Activated B cell treated with CpG ODN at 0.5 μM for 24 hours (primary cell): ENCODE measurements at regions of chr14 and their contacts with region 1.

Region 1: GRCh38 chr14:32076278-32077080 is 625 bp upstream of the ARHGAP5 start:
- DNase-seq: peak; percentile 82
- ATAC-seq: peak; percentile 68
- H3K4me3 Mint-ChIP-seq: peak overlapping the region; percentile 93
- H3K27ac Mint-ChIP-seq: peak overlapping the region; percentile 98
- H3K4me1 Mint-ChIP-seq: peaks cover 33% of the 10 kb centered on the region
- H3K27me3 Mint-ChIP-seq: no peaks in the 10 kb centered on the region
- CTCF ChIP-seq: no peak

Region 2: DNA sequence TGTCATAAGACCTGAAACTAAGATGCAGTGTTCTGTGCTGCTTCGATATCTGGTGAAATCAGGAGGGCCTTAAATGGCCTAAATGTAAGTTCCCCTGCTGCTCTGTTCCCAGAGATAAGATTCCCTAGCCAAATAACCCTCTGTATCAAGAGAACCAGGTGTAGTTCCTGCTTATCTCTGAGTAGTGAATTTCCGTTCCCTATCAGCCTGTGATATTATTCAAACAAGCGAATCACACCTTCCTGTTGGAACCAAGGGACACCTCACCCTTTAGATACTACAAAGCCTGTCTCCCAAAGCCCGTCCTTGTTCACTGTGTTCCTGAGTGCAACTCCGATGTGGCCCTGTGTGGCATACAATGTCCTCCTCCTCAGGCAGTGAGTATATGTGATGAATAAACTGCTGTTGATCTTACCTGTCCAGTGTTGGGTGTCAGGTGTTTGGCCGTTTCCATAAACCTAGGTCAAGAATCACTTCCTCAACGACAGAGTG is 1254.4 kb before region 1 on chr14:
- CTCF ChIA-PET with region 1: no interaction called
- POLR2A ChIA-PET with region 1: interaction called, 10 read pairs
- intact Hi-C with region 1: no loop called
- DNase-seq: no peak
- ATAC-seq: no peak
- H3K4me3 Mint-ChIP-seq: no peak overlapping the region
- H3K27ac Mint-ChIP-seq: no peak overlapping the region
- H3K4me1 Mint-ChIP-seq: peaks cover 2% of the 10 kb centered on the region
- H3K27me3 Mint-ChIP-seq: peaks cover 5% of the 10 kb centered on the region
- CTCF ChIP-seq: no peak

Region 3: GRCh38 chr14:31420319-31421111 is 656.0 kb before region 1 on chr14 and contains the start of gene HEATR5A:
- CTCF ChIA-PET with region 1: no interaction called
- POLR2A ChIA-PET with region 1: interaction called, 9 read pairs
- intact Hi-C with region 1: loop called (anchors 2 kb)
- DNase-seq: peak; percentile 95
- ATAC-seq: peak; percentile 97
- H3K4me3 Mint-ChIP-seq: peak within 1 kb of the TSS; percentile 96
- H3K27ac Mint-ChIP-seq: peak within 1 kb of the TSS; percentile 90
- H3K4me1 Mint-ChIP-seq: peaks cover 22% of the 10 kb centered on the region
- H3K27me3 Mint-ChIP-seq: no peaks in the 10 kb centered on the region
- CTCF ChIP-seq: no peak
- total RNA-seq, gene HEATR5A: 11.1 and 13.2 TPM in 2 replicates

Region 4: GRCh38 chr14:31843361-31844091 is 233.0 kb before region 1 on chr14:
- CTCF ChIA-PET with region 1: no interaction called
- POLR2A ChIA-PET with region 1: no interaction called
- intact Hi-C with region 1: no loop called
- DNase-seq: no peak
- ATAC-seq: no peak
- H3K4me3 Mint-ChIP-seq: no peak overlapping the region
- H3K27ac Mint-ChIP-seq: no peak overlapping the region
- H3K4me1 Mint-ChIP-seq: no peaks in the 10 kb centered on the region
- H3K27me3 Mint-ChIP-seq: no peaks in the 10 kb centered on the region
- CTCF ChIP-seq: no peak

Region 5: DNA sequence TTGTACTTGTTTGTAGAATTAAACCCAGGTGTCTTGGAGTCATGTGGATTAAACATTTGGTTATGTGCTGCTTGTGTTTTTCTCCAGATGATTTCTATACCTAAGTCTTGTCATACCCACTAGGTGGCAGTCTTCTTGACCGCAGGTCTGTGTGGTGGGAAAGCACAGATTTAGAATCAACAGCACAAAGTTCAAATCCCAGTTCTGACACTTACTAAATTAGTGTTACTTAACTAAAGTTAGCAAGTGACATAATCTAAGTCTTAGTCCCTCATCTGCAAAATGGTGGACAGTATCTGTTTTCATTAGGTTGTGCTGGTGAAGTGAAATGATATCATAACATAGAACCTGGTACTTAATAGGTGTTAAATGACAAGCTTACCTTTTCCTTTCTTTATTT is 150.4 kb before region 1 on chr14:
- CTCF ChIA-PET with region 1: interaction called, 8 read pairs
- POLR2A ChIA-PET with region 1: interaction called, 7 read pairs
- intact Hi-C with region 1: loop called (anchors 2 kb)
- DNase-seq: no peak
- ATAC-seq: peak; percentile 47
- H3K4me3 Mint-ChIP-seq: no peak overlapping the region
- H3K27ac Mint-ChIP-seq: no peak overlapping the region
- H3K4me1 Mint-ChIP-seq: no peaks in the 10 kb centered on the region
- H3K27me3 Mint-ChIP-seq: no peaks in the 10 kb centered on the region
- CTCF ChIP-seq: no peak

Region 6: GRCh38 chr14:32150392-32150791 is 73.9 kb after region 1 on chr14:
- CTCF ChIA-PET with region 1: no interaction called
- POLR2A ChIA-PET with region 1: no interaction called
- intact Hi-C with region 1: loop called (anchors 5 kb)
- DNase-seq: no peak
- ATAC-seq: no peak
- H3K4me3 Mint-ChIP-seq: no peak overlapping the region
- H3K27ac Mint-ChIP-seq: no peak overlapping the region
- H3K4me1 Mint-ChIP-seq: no peaks in the 10 kb centered on the region
- H3K27me3 Mint-ChIP-seq: no peaks in the 10 kb centered on the region
- CTCF ChIP-seq: no peak

Region 7: DNA sequence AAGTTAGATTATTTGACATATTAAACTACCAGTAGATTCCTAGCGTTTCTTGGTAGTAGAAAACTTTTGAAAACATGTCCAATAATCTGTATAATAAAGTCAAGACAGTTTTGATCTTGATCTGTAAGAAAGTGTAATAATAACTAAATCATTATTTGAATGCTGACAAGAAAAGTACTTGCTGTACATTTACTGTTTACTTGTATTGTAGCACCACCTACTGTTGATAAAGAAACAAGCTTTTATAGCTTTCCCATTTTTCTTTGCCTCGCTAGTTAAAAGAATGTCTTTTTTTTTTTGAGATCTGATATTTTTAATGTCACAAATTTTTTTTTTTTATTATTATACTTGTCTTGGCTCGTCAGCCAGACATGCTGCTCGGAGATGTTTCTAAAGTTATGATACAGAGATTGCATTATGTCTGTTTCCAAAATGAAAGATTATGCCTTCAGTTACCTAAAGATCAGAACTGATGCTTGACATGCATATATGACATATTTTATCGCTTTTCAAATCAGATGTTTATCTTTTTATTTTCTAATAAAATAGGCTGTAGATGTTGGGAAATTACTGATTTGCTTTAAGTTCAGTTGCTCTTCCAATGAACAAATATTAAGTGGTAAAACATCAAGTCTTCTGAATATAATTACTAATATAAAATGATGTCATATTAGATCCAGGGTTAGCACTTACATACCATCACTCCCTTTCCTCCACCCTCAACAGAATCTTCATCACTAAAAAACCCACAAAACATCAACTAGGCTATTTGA is 393.1 kb after region 1 on chr14:
- CTCF ChIA-PET with region 1: no interaction called
- POLR2A ChIA-PET with region 1: no interaction called
- intact Hi-C with region 1: loop called (anchors 2 kb)
- DNase-seq: no peak
- ATAC-seq: no peak
- H3K4me3 Mint-ChIP-seq: no peak overlapping the region
- H3K27ac Mint-ChIP-seq: no peak overlapping the region
- H3K4me1 Mint-ChIP-seq: no peaks in the 10 kb centered on the region
- H3K27me3 Mint-ChIP-seq: no peaks in the 10 kb centered on the region
- CTCF ChIP-seq: no peak